Adrenal gland (tissue), 19 donors: ENCODE measurements at regions of chr3 and their contacts with region 1.

Region 1: GRCh38 chr3:19711160-19711782 is 222.7 kb downstream of the EFHB start:
- DNase-seq: no peak
- H3K4me3 ChIP-seq: no peak overlapping the region
- H3K27ac ChIP-seq: no peak overlapping the region
- H3K4me1 ChIP-seq: no peaks in the 10 kb centered on the region
- H3K27me3 ChIP-seq: no peaks in the 10 kb centered on the region
- CTCF ChIP-seq: no peak
- POLR2A ChIP-seq: no peak

Region 2: DNA sequence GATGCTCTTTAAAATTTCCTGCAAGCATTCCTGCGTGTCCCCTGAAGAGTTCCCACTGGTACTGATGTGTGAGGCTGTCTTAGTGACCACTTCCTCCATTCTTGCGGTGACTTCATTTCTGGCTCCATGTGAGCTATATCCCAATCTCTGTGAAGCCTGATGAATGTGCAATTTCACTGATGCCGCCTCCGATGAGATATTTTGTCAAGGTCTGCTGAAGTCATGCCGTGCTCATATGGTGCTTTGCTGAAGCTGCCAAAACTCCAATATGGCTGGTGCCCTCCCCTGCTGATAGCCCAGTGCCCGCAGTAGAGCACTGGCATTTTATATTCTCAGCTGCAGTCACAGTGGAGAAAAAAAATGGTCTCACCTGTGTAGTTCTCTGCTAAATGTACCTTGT is 48.8 kb before region 1 on chr3:
- intact Hi-C with region 1: no loop called
- DNase-seq: no peak
- H3K4me3 ChIP-seq: no peak overlapping the region
- H3K27ac ChIP-seq: no peak overlapping the region
- H3K4me1 ChIP-seq: no peaks in the 10 kb centered on the region
- H3K27me3 ChIP-seq: no peaks in the 10 kb centered on the region
- CTCF ChIP-seq: no peak
- POLR2A ChIP-seq: no peak

Region 3: DNA sequence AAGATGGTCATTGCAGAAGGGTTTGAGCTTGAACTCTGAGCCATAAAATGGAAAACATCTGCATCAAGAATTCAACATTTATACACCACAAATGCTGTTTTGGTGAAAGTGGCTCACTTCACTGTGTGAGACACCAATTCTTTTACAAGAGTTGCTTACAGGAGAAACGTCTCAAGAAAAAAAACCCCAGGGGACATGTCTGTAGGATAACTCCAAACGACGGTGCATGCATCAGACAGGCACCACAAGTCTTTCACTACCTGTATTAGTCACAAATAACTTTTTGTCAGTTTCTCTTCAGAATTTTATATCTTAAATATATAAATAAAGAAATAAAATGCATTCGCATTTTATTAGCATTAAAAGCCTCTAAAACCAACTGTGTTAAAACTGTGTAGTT is 58.4 kb after region 1 on chr3:
- intact Hi-C with region 1: loop called in 1 of 2 experiments (anchors 10 kb)
- DNase-seq: no peak
- H3K4me3 ChIP-seq: no peak overlapping the region
- H3K27ac ChIP-seq: no peak overlapping the region
- H3K4me1 ChIP-seq: no peaks in the 10 kb centered on the region
- H3K27me3 ChIP-seq: no peaks in the 10 kb centered on the region
- CTCF ChIP-seq: no peak
- POLR2A ChIP-seq: no peak

Region 4: GRCh38 chr3:20043398-20043797 is 332.1 kb after region 1 on chr3:
- intact Hi-C with region 1: no loop called
- DNase-seq: peak; percentile 75 to 95 (median 91)
- H3K4me3 ChIP-seq: peak overlapping the region in 1 of 4 donors; percentile 11
- H3K27ac ChIP-seq: peak overlapping the region; percentile 2 to 75 (median 66)
- H3K4me1 ChIP-seq: peaks cover 33 to 43% of the 10 kb centered on the region in 2 donors
- H3K27me3 ChIP-seq: no peaks in the 10 kb centered on the region
- CTCF ChIP-seq: no peak
- POLR2A ChIP-seq: no peak

Region 5: GRCh38 chr3:20160230-20160629 is 449.0 kb after region 1 on chr3:
- intact Hi-C with region 1: no loop called
- DNase-seq: no peak
- H3K4me3 ChIP-seq: no peak overlapping the region
- H3K27ac ChIP-seq: no peak overlapping the region
- H3K4me1 ChIP-seq: no peaks in the 10 kb centered on the region
- H3K27me3 ChIP-seq: no peaks in the 10 kb centered on the region
- CTCF ChIP-seq: no peak
- POLR2A ChIP-seq: no peak